Natural killer cell (primary cell): ENCODE measurements at regions of chr3 and their contacts with region 1.

Region 1: DNA sequence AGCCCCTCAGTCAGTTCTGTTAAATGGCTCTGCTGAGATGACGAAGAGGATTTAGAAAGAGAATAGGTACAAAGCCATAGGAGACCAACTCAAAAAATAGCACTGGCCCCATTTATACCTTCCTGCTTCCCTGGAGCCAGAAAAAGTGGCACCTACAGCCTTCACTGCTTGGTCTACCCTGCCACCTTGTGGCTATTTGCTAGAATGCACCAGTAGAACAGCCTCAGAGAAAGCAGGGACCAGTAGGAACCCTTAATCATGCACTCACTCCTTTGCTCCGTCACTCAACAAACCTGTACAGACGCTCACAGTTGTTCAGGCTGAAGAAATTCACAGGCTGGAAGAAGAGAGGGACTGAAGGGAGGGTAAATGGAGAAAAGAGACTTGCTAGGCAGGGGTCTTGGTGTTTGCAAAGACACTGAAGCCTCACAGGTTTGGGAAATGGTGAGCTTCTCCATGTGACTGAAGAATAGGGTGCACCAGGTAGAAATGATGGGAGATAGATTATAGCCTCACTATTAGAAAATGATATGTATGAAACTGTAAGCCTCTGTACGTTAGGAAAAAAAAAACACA is 12.1 kb upstream of the RTP2 start:
- DNase-seq: peak; percentile 55 to 86
- ATAC-seq: peak; percentile 92 to 96 (median 93)
- H3K4me3 ChIP-seq: no peak overlapping the region
- H3K4me3 Mint-ChIP-seq: no peak overlapping the region
- H3K27ac ChIP-seq: no peak overlapping the region
- H3K27ac Mint-ChIP-seq: no peak overlapping the region
- H3K4me1 ChIP-seq: no peaks in the 10 kb centered on the region
- H3K4me1 Mint-ChIP-seq: peaks cover 4 to 9% of the 10 kb centered on the region in 2 donors
- H3K27me3 ChIP-seq: no peaks in the 10 kb centered on the region
- H3K27me3 Mint-ChIP-seq: peaks cover 8 to 12% of the 10 kb centered on the region in 2 donors
- CTCF ChIP-seq: peak; percentile 95

Region 2: DNA sequence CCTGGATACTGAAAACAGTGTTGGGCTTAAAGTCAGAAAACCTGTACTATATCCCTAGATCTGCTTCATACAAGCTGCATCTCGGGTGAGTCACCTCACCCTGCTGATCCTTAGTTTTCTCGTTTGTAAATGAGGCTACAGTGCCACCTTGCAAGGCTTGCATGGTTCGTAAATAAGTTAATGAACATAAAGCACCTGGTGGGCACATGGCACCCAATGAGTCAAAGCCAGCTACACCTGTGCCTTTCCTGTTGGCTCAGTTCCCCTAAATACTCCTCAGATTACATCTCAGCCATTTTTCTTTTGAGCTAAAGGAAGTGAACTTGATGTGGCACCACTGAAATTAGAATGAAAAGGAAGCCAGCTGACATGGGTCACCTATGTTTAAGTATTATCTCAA is 490.7 kb before region 1 on chr3:
- intact Hi-C with region 1: loop called (anchors 1 kb)
- DNase-seq: no peak
- ATAC-seq: no peak
- H3K4me3 ChIP-seq: no peak overlapping the region
- H3K4me3 Mint-ChIP-seq: no peak overlapping the region
- H3K27ac ChIP-seq: no peak overlapping the region
- H3K27ac Mint-ChIP-seq: no peak overlapping the region
- H3K4me1 ChIP-seq: no peaks in the 10 kb centered on the region
- H3K4me1 Mint-ChIP-seq: no peaks in the 10 kb centered on the region
- H3K27me3 ChIP-seq: no peaks in the 10 kb centered on the region
- H3K27me3 Mint-ChIP-seq: peaks cover 6 to 15% of the 10 kb centered on the region in 2 donors
- CTCF ChIP-seq: no peak

Region 3: GRCh38 chr3:187319699-187320302 is 394.7 kb before region 1 on chr3:
- intact Hi-C with region 1: loop called (anchors 1 kb)
- DNase-seq: peak; percentile 29 to 68
- ATAC-seq: peak; percentile 72 to 83 (median 80)
- H3K4me3 ChIP-seq: no peak overlapping the region
- H3K4me3 Mint-ChIP-seq: no peak overlapping the region
- H3K27ac ChIP-seq: no peak overlapping the region
- H3K27ac Mint-ChIP-seq: no peak overlapping the region
- H3K4me1 ChIP-seq: peaks cover 12% of the 10 kb centered on the region
- H3K4me1 Mint-ChIP-seq: peaks cover 11 to 14% of the 10 kb centered on the region in 2 donors
- H3K27me3 ChIP-seq: peaks cover 2% of the 10 kb centered on the region
- H3K27me3 Mint-ChIP-seq: peaks cover 18 to 26% of the 10 kb centered on the region in 2 donors
- CTCF ChIP-seq: peak; percentile 62

Region 4: DNA sequence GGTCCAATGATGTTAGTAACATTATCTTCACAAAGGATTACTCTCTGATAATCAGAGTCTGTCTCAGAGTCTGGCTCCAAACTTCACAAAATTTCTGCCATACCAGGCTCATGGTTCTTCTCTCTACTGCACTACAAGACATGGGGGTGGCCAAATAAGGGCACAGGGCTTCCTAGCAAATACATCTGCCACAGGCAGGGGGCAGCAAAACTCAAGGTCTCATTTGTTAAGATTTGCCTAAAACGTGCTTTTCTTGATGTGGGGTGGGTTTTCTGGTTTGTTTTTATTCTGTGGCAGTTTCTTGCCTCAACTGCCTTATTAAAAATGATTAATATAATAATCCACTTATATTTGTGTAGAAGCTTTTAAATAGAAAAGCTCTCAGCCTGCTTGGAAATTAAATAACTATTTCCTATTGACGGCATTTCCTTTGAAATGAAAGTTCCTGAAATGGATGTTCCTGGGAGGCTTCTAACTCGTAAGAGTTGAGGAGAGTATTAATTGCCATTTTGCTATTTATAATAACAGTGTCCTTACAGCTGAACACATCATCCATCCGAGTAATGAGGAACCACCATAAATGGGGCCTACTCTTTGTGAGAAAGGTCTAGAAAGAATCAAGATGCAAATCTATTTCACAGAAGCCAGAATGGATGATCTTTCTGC is 98.1 kb before region 1 on chr3:
- intact Hi-C with region 1: loop called (anchors 1 kb)
- DNase-seq: peak; percentile 36 to 69
- ATAC-seq: peak; percentile 80 to 87 (median 81)
- H3K4me3 ChIP-seq: no peak overlapping the region
- H3K4me3 Mint-ChIP-seq: no peak overlapping the region
- H3K27ac ChIP-seq: no peak overlapping the region
- H3K27ac Mint-ChIP-seq: no peak overlapping the region
- H3K4me1 ChIP-seq: no peaks in the 10 kb centered on the region
- H3K4me1 Mint-ChIP-seq: peaks cover 8 to 13% of the 10 kb centered on the region in 2 donors
- H3K27me3 ChIP-seq: no peaks in the 10 kb centered on the region
- H3K27me3 Mint-ChIP-seq: peaks cover under 1 to 4% of the 10 kb centered on the region in 2 donors
- CTCF ChIP-seq: peak; percentile 77

Region 5: DNA sequence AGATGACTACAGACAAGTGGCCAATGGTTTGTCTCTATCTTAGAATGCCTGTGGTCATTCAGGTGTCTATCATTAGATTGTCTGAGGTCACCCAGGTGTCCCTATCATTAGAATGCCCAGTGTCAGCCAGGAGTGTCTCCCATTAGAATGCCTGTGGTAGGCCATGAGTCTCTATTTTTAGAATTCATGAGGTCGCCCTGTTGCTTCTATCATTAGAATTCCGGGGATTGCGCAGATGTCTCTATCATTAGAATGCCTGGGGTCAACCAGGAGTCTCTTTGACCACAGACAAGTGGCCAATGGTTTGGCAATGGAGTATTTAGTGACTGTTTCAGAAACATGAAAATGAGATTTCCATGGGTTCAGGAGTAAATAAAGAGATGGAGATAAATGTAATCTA is 19.7 kb before region 1 on chr3:
- intact Hi-C with region 1: no loop called
- DNase-seq: no peak
- ATAC-seq: no peak
- H3K4me3 ChIP-seq: no peak overlapping the region
- H3K4me3 Mint-ChIP-seq: no peak overlapping the region
- H3K27ac ChIP-seq: no peak overlapping the region
- H3K27ac Mint-ChIP-seq: no peak overlapping the region
- H3K4me1 ChIP-seq: no peaks in the 10 kb centered on the region
- H3K4me1 Mint-ChIP-seq: no peaks in the 10 kb centered on the region
- H3K27me3 ChIP-seq: peaks cover 3% of the 10 kb centered on the region
- H3K27me3 Mint-ChIP-seq: peaks cover 24 to 33% of the 10 kb centered on the region in 2 donors
- CTCF ChIP-seq: no peak

Region 6: DNA sequence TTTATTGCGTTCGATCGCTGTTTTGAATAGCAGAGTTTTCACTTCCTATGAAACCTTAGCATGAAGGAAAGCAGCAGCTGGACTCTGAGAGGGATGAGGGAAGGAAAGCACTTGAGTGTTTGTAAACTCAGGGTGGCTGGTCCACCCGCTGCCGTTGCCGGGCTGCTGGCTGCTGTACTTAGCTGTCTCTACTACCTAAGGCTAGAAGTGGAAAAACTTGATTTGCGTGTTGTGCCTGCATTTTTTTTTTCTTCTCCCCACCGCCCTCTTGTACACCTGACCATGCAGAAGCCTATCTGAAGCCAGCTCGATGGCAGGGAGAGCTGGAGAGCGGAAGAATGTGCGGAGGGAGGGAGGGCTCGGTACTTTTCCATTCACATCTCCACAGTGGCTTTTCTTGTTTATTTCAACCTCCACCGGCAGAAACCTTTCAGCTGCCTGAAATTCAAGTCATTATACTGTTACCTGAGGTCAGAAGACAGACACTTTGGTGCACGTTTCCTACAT is 35.6 kb after region 1 on chr3:
- intact Hi-C with region 1: no loop called
- DNase-seq: no peak
- ATAC-seq: no peak
- H3K4me3 ChIP-seq: no peak overlapping the region
- H3K4me3 Mint-ChIP-seq: no peak overlapping the region
- H3K27ac ChIP-seq: no peak overlapping the region
- H3K27ac Mint-ChIP-seq: no peak overlapping the region
- H3K4me1 ChIP-seq: peaks cover 8% of the 10 kb centered on the region
- H3K4me1 Mint-ChIP-seq: peaks cover 36 to 44% of the 10 kb centered on the region in 2 donors
- H3K27me3 ChIP-seq: no peaks in the 10 kb centered on the region
- H3K27me3 Mint-ChIP-seq: no peaks in the 10 kb centered on the region
- CTCF ChIP-seq: no peak